ENCODE measurements at regions of chr4 and their contacts with region 1.

Region 1: DNA sequence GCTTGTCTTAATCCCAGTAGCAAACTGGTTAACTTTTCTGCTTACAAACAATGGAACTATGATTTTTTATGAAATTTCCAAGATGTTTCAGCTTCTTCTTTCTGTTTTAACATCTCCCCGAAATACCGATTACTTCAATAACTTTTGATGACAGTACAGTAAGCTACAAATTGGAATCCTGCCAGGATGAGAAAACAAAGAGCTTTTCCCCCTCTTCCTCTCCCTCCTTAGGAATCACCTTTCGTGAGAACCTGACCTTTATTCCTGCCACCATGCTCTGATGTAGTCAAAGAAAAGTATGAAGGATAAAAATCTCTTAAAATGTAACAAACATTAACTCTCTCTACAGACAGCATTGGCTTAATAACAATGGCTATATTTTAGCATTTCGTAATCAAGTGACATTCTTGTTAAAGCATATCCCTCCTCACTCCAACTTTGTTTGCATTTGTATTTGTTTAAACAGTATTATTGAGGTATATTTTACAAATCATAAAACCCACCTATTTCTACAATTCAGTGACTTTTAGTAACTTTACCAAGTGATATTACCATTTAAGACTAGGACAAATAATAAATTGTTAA is 148.7 kb upstream of the NAP1L5 start:
- DNase-seq: no peak
- ATAC-seq: no peak
- H3K4me3 ChIP-seq: no peak overlapping the region
- H3K27ac ChIP-seq: no peak overlapping the region
- H3K4me1 ChIP-seq: no peaks in the 10 kb centered on the region
- H3K27me3 ChIP-seq: no peaks in the 10 kb centered on the region
- CTCF ChIP-seq: no peak
- EP300 ChIP-seq: no peak
- POLR2A ChIP-seq: no peak
- RAD21 ChIP-seq: no peak

Region 2: DNA sequence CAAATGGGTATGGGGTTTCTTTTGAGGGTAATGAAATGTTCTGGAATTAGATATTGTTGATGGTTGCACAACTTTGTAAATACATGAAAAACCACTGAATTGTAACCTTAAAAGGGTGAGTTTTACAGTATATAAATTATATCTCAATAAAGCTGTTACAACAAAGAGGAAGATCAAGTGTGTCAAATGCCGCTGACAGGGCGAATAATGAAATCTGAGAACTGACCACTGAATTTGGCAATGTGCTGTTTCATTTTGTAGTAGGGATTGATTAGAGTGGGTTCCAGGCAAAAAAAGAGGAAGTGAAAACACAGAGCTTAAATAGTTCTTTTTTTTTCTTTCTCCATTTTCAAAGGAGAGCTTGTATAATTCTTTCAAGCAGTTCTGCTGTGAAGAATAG is 12.5 kb after region 1 on chr4:
- CTCF ChIA-PET with region 1: interaction called, 3 read pairs
- POLR2A ChIA-PET with region 1: interaction called, 4 read pairs
- RAD21 ChIA-PET with region 1: no interaction called
- SMC1A ChIA-PET with region 1: interaction called, 10 read pairs
- in situ Hi-C with region 1: no loop called
- intact Hi-C with region 1: no loop called
- DNase-seq: peak; percentile 61
- ATAC-seq: peak; percentile 96
- H3K4me3 ChIP-seq: no peak overlapping the region
- H3K27ac ChIP-seq: no peak overlapping the region
- H3K4me1 ChIP-seq: peaks cover 6% of the 10 kb centered on the region; the same call in 1 of the 2 replicates
- H3K27me3 ChIP-seq: no peaks in the 10 kb centered on the region
- CTCF ChIP-seq: no peak
- EP300 ChIP-seq: peak in 1 of 2 experiments; percentile 71; a peak in 2 of 4 replicates
- POLR2A ChIP-seq: no peak
- RAD21 ChIP-seq: no peak

Region 3: GRCh38 chr4:88900432-88900831 is 54.1 kb after region 1 on chr4:
- CTCF ChIA-PET with region 1: no interaction called
- POLR2A ChIA-PET with region 1: no interaction called
- RAD21 ChIA-PET with region 1: no interaction called
- SMC1A ChIA-PET with region 1: no interaction called
- in situ Hi-C with region 1: no loop called
- intact Hi-C with region 1: no loop called
- DNase-seq: no peak
- ATAC-seq: no peak
- H3K4me3 ChIP-seq: no peak overlapping the region
- H3K27ac ChIP-seq: no peak overlapping the region
- H3K4me1 ChIP-seq: no peaks in the 10 kb centered on the region
- H3K27me3 ChIP-seq: no peaks in the 10 kb centered on the region
- CTCF ChIP-seq: no peak
- EP300 ChIP-seq: no peak
- POLR2A ChIP-seq: no peak
- RAD21 ChIP-seq: no peak

Measured in GM12878 (cell line).